ENCODE measurements at regions of chr5 and their contacts with region 1.

Region 1: GRCh38 chr5:56270568-56271392 is 37.6 kb upstream of the ANKRD55 start:
- DNase-seq: peak; percentile 62
- ATAC-seq: peak; percentile 97
- H3K4me3 ChIP-seq: no peak overlapping the region
- H3K27ac ChIP-seq: no peak overlapping the region
- H3K4me1 ChIP-seq: no peaks in the 10 kb centered on the region
- H3K27me3 ChIP-seq: no peaks in the 10 kb centered on the region
- CTCF ChIP-seq: peak; percentile 89 to 99 (median 99)
- EP300 ChIP-seq: no peak
- POLR2A ChIP-seq: no peak
- RAD21 ChIP-seq: peak; percentile 99

Region 2: GRCh38 chr5:55172051-55172899 is 1098.5 kb before region 1 on chr5:
- CTCF ChIA-PET with region 1: interaction called, 3 read pairs
- POLR2A ChIA-PET with region 1: no interaction called
- RAD21 ChIA-PET with region 1: no interaction called
- SMC1A ChIA-PET with region 1: interaction called, 3 read pairs
- in situ Hi-C with region 1: no loop called
- intact Hi-C with region 1: loop called (anchors 10 kb)
- DNase-seq: peak; percentile 45
- ATAC-seq: peak; percentile 84
- H3K4me3 ChIP-seq: peak overlapping the region; percentile 69
- H3K27ac ChIP-seq: no peak overlapping the region
- H3K4me1 ChIP-seq: peaks cover 9% of the 10 kb centered on the region
- H3K27me3 ChIP-seq: peaks cover 3 to 22% of the 10 kb centered on the region in 2 experiments; a peak in 3 of 4 replicates
- CTCF ChIP-seq: peak; percentile 60 to 89 (median 82); a peak in 5 of 6 replicates
- EP300 ChIP-seq: no peak
- POLR2A ChIP-seq: no peak
- RAD21 ChIP-seq: peak; percentile 92

Region 3: DNA sequence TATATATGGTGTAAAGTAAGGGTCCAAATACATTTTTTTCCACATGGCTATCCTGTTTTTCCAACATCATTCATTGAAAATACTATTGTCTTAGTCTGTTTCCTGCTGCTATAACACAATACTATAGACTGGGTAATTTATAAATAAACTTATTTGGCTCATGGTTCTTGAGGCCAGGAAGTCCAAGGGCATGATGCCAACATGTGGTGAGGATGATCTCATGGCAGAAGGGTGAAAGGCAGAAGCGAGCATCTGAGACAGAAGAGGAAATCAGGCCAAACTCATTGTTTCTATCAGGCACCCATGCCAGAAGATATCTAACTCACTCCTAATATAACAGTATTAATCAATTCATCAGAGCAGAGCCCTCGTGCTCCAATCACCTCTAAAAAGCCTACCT is 80.3 kb before region 1 on chr5:
- CTCF ChIA-PET with region 1: no interaction called
- POLR2A ChIA-PET with region 1: no interaction called
- RAD21 ChIA-PET with region 1: no interaction called
- SMC1A ChIA-PET with region 1: no interaction called
- in situ Hi-C with region 1: no loop called
- intact Hi-C with region 1: no loop called
- DNase-seq: no peak
- ATAC-seq: no peak
- H3K4me3 ChIP-seq: no peak overlapping the region
- H3K27ac ChIP-seq: no peak overlapping the region
- H3K4me1 ChIP-seq: no peaks in the 10 kb centered on the region
- H3K27me3 ChIP-seq: no peaks in the 10 kb centered on the region
- CTCF ChIP-seq: no peak
- EP300 ChIP-seq: no peak
- POLR2A ChIP-seq: no peak
- RAD21 ChIP-seq: no peak

Region 4: GRCh38 chr5:56229111-56229510 is 41.7 kb before region 1 on chr5:
- CTCF ChIA-PET with region 1: no interaction called
- POLR2A ChIA-PET with region 1: no interaction called
- RAD21 ChIA-PET with region 1: no interaction called
- SMC1A ChIA-PET with region 1: no interaction called
- in situ Hi-C with region 1: no loop called
- intact Hi-C with region 1: no loop called
- DNase-seq: no peak
- ATAC-seq: no peak
- H3K4me3 ChIP-seq: no peak overlapping the region
- H3K27ac ChIP-seq: no peak overlapping the region
- H3K4me1 ChIP-seq: no peaks in the 10 kb centered on the region
- H3K27me3 ChIP-seq: no peaks in the 10 kb centered on the region
- CTCF ChIP-seq: no peak
- EP300 ChIP-seq: no peak
- POLR2A ChIP-seq: no peak
- RAD21 ChIP-seq: no peak

Region 5: DNA sequence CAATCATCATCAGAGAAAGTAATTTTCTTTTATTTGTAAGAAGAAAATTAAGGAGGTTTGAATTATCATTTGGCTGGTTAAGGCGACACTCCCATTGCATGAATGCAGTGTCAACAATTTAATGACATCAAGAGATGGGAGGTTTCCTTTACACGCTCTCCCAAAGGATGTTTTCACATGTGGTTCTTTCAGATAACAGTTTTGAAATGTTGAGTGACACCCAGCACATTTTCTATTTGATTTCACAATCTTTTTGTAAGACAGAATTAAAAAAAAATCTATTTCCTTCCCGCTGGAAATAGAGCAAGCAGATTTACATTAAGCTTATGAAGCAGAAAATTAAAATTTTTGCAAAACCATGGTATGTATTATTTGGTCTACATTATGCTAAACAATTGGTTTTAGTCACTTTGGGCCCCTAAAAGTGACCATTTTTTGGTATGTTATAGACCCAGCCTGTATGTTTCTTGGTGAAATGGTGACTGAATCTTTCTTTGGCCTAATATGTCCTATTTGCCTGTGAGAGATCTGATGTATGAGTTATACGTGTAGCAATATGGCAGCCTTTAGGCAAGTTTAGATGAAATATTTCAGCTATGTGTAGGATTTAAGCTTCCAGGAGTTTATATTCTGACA is 18.7 kb before region 1 on chr5:
- CTCF ChIA-PET with region 1: no interaction called
- POLR2A ChIA-PET with region 1: no interaction called
- RAD21 ChIA-PET with region 1: no interaction called
- SMC1A ChIA-PET with region 1: no interaction called
- in situ Hi-C with region 1: no loop called
- intact Hi-C with region 1: no loop called
- DNase-seq: no peak
- ATAC-seq: no peak
- H3K4me3 ChIP-seq: no peak overlapping the region
- H3K27ac ChIP-seq: no peak overlapping the region
- H3K4me1 ChIP-seq: no peaks in the 10 kb centered on the region
- H3K27me3 ChIP-seq: no peaks in the 10 kb centered on the region
- CTCF ChIP-seq: no peak
- EP300 ChIP-seq: no peak
- POLR2A ChIP-seq: no peak
- RAD21 ChIP-seq: no peak

Region 6: DNA sequence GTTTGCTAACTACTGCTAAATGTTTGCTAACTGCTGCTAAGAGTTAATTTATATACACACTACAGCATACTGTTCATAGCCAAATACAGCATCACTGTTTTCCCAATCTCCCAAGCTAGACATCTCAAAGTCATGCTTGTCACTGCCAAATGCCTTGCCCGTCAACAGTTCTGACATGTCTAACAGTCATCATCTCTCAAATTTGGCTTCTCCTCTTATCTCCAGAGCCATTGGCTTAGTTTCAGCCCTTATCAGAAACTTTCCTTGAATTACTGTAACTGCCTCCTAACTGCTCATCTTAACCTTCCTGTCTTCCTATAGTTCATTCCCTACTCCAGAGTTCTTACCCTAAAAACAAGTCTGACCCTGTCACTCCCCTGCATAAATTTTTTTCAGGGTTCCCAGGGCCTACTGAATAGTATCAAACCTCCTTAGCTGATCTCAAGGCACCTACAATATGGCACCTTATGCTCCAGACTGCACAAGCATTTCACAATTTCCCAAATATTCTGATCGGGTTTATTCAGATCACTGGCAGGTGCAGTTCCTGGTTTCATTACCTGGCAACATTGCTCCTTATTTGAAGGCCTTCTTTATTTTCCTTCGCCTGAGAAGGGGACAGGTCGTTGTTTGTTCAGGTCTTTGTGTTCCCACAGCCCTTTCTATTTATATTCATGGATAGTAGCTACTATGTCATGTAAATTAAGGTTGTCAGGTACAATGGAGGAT is 18.3 kb after region 1 on chr5:
- CTCF ChIA-PET with region 1: interaction called, 8 read pairs
- POLR2A ChIA-PET with region 1: interaction called, 4 read pairs
- RAD21 ChIA-PET with region 1: interaction called, 11 read pairs
- SMC1A ChIA-PET with region 1: interaction called, 16 read pairs
- in situ Hi-C with region 1: no loop called
- intact Hi-C with region 1: no loop called
- DNase-seq: no peak
- ATAC-seq: no peak
- H3K4me3 ChIP-seq: no peak overlapping the region
- H3K27ac ChIP-seq: no peak overlapping the region
- H3K4me1 ChIP-seq: no peaks in the 10 kb centered on the region
- H3K27me3 ChIP-seq: no peaks in the 10 kb centered on the region
- CTCF ChIP-seq: no peak
- EP300 ChIP-seq: no peak
- POLR2A ChIP-seq: no peak
- RAD21 ChIP-seq: no peak

Region 7: GRCh38 chr5:56415356-56415765 is 144.6 kb after region 1 on chr5:
- CTCF ChIA-PET with region 1: interaction called, 9 read pairs
- POLR2A ChIA-PET with region 1: no interaction called
- RAD21 ChIA-PET with region 1: interaction called, 11 read pairs
- SMC1A ChIA-PET with region 1: interaction called, 17 read pairs
- in situ Hi-C with region 1: no loop called
- intact Hi-C with region 1: loop called (anchors 2 kb)
- DNase-seq: peak; percentile 92
- ATAC-seq: peak; percentile 84
- H3K4me3 ChIP-seq: peak overlapping the region; percentile 48; the same call in 1 of the 2 replicates
- H3K27ac ChIP-seq: peak overlapping the region; percentile 79
- H3K4me1 ChIP-seq: peaks cover 40% of the 10 kb centered on the region
- H3K27me3 ChIP-seq: no peaks in the 10 kb centered on the region
- CTCF ChIP-seq: no peak
- EP300 ChIP-seq: peak in 1 of 2 experiments; percentile 39; a peak in 2 of 4 replicates
- POLR2A ChIP-seq: 0 out of 2 replicates have a peak, but pooled peaks have one; percentile 26
- RAD21 ChIP-seq: 0 out of 2 replicates have a peak, but pooled peaks have one; percentile 10

Region 8: GRCh38 chr5:56725711-56726411 is 455.1 kb after region 1 on chr5:
- CTCF ChIA-PET with region 1: no interaction called
- POLR2A ChIA-PET with region 1: no interaction called
- RAD21 ChIA-PET with region 1: interaction called, 3 read pairs
- SMC1A ChIA-PET with region 1: interaction called, 3 read pairs
- in situ Hi-C with region 1: no loop called
- intact Hi-C with region 1: loop called (anchors 10 kb)
- DNase-seq: no peak
- ATAC-seq: peak; percentile 71
- H3K4me3 ChIP-seq: no peak overlapping the region
- H3K27ac ChIP-seq: no peak overlapping the region
- H3K4me1 ChIP-seq: peaks cover 7% of the 10 kb centered on the region; the same call in 1 of the 2 replicates
- H3K27me3 ChIP-seq: peaks cover 0 to 3% of the 10 kb centered on the region in 2 experiments; a peak in 1 of 4 replicates
- CTCF ChIP-seq: no peak
- EP300 ChIP-seq: no peak
- POLR2A ChIP-seq: no peak
- RAD21 ChIP-seq: no peak

Region 9: DNA sequence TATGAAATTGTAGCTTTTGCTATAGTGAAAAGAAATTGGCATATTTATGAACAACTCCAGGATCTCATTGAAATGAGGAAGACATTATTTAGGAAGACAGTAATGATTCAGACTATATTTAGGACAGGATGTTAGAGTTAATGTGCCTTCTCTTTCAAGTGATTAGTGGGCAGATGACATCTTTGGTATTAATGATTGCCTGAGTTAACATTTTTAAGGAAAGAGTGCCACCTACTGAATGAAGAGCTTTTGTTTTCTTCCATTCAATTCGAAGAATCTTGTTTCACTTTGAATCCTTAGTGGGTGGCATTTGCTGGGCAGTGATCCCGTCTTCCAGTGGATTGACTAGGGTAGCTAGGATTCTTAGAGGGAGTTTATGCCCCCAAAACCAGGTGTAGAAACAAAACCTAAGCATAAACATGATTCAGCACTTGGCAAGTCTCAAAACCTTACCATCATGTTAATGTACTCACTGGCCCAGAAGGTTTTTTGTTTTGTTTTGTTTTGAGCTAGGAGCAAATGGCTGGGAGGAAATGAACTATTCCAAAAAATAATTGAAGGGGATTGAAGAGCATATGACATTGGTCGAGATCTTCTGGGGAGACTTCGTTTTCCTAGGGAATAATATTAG is 567.7 kb after region 1 on chr5:
- CTCF ChIA-PET with region 1: interaction called, 296 read pairs
- POLR2A ChIA-PET with region 1: interaction called, 3 read pairs
- RAD21 ChIA-PET with region 1: interaction called, 174 read pairs
- SMC1A ChIA-PET with region 1: interaction called, 164 read pairs
- in situ Hi-C with region 1: loop called (anchors 5 kb)
- intact Hi-C with region 1: loop called (anchors 1 kb)
- DNase-seq: peak; percentile 42
- ATAC-seq: peak; percentile 85
- H3K4me3 ChIP-seq: no peak overlapping the region; the same call in 1 of the 2 replicates
- H3K27ac ChIP-seq: no peak overlapping the region
- H3K4me1 ChIP-seq: peaks cover 8% of the 10 kb centered on the region; the same call in 1 of the 2 replicates
- H3K27me3 ChIP-seq: no peaks in the 10 kb centered on the region
- CTCF ChIP-seq: peak; percentile 41 to 78 (median 52); a peak in 5 of 6 replicates
- EP300 ChIP-seq: no peak
- POLR2A ChIP-seq: no peak
- RAD21 ChIP-seq: peak; percentile 79

Region 10: DNA sequence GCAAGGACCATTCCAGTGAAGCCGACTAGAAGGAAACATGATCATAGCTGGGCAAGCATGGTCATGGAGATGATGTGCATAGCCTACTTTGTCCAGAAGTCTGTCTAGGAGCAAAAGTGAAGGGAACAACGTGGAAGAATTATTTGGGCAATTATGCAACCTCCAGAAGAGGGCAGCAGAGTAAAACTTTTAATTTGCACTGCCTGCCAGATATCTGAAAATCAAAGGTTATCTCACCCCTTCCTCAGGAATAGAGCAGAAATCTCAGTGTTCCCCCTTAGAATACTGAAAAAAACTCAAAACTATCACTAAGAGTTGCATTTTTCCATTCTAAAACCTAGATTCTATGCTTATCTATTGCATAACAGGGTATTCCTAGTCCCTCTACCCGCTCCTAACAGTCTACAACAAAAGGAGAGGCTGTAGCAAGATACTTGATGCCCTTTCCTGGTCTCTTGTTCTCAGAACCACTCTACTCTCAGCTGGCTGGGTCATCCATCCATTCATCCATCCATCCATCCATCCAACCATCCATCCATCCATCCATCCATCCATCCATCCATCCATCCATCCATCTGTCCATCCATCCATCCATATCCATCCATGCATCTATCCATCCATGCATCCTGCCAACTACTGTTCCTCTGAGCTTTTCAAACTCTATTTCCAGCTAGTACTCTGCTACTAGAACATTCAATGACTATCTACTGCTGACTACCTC is 630.2 kb after region 1 on chr5:
- CTCF ChIA-PET with region 1: interaction called, 19 read pairs
- POLR2A ChIA-PET with region 1: no interaction called
- RAD21 ChIA-PET with region 1: interaction called, 14 read pairs
- SMC1A ChIA-PET with region 1: interaction called, 15 read pairs
- in situ Hi-C with region 1: no loop called
- intact Hi-C with region 1: loop called (anchors 2 kb)
- DNase-seq: no peak
- ATAC-seq: peak; percentile 88
- H3K4me3 ChIP-seq: no peak overlapping the region
- H3K27ac ChIP-seq: no peak overlapping the region
- H3K4me1 ChIP-seq: no peaks in the 10 kb centered on the region
- H3K27me3 ChIP-seq: no peaks in the 10 kb centered on the region; a peak in 1 of 4 replicates
- CTCF ChIP-seq: peak; percentile 60 to 83 (median 75); a peak in 5 of 6 replicates
- EP300 ChIP-seq: no peak
- POLR2A ChIP-seq: no peak
- RAD21 ChIP-seq: peak; percentile 89